Posterior vena cava (tissue), 2 donors: ENCODE measurements at regions of chr3 and their contacts with region 1.

Region 1: GRCh38 chr3:47802734-47803477 is at the start of gene DHX30:
- DNase-seq: peak; percentile 97
- total RNA-seq, gene DHX30: 41.0 to 41.4 TPM

Region 2: DNA sequence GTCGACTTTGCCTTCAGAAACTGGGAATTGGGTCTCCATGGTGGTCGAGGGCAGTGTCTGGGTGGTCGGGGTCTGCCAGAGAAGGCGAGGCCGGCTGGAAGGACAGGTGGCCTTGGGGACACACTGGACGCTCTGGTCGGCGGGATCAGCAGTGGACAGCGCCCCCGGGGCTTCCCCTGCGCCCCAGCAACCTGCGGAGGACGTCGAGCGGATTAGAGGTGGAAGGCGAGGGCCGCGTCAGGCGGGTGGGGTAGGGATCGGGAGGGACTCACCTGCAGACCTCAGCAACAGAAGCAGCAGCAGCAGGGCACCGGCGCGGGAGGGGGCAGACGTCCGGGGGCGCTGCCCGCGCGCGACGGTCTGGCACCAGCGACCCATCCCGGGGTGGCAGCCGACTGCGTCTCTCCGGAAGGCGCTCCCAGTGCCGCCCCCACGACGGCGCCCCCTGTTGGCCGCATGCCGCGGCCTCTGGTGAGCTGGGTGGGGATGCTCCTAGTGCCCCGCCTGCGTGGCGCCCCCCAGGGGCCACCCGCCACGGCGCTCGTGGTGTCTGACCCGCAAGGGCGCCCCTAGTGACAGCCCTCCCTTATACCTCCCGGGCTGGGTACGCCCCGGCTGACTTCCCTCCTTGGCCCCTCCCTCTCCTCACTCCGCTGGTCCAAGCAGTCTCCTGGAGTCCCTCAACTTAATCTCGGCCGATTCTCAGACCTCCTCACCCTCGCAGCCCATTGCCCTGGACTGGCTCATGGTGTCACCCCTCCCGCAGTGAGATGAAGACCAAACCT is 1085.3 kb before region 1 on chr3 and contains the start of gene PRSS50:
- intact Hi-C with region 1: loop called in 1 of 2 experiments (anchors 5 kb)
- DNase-seq: peak; percentile 71
- total RNA-seq, gene PRSS50: not detected

Region 3: GRCh38 chr3:47536221-47536891 is 266.6 kb before region 1 on chr3:
- intact Hi-C with region 1: loop called in 1 of 2 experiments (anchors 5 kb)
- DNase-seq: peak; percentile 79

Region 4: DNA sequence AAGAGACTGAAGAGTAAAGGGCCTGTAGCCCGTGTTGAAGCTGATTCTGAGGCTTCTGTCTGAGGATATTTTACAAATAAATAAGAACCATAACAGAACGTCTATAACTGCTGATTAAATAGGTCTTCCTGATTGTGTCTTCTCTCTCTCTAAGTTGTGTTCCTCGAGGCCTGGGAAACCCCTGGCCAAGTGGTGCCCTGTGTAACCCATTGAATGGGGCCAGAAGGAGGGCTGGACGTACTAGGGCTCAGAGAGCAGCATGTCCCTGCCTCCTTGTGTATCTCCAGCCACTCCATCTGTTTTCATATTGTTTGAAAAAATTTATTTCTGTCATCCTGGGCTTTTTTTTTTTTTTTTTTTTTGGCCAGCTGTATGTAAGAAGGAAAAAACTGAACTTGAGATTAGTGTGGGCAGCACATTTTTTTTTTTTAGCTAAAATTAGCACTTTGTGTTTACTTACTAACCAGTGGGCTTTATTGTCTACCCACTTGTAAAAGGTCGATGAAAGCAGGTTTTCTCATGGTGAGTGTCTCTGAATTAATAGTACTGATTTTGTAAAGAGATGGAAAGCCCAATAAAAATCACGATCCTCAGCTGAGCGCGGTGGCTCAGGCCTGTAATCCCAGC is 10.8 kb after region 1 on chr3:
- intact Hi-C with region 1: loop called in 1 of 2 experiments (anchors 1 kb)
- DNase-seq: no peak